BJ (cell line): ENCODE measurements at regions of chr14 and their contacts with region 1.

Region 1: GRCh38 chr14:24036169-24036962 is 15.4 kb upstream of the CARMIL3 start:
- DNase-seq: no peak
- H3K4me3 ChIP-seq: peak overlapping the region; percentile 54
- H3K27me3 ChIP-seq: 0 out of 2 replicates have a peak, but pooled peaks cover 2% of the 10 kb centered on the region
- CTCF ChIP-seq: peak; percentile 93

Region 2: GRCh38 chr14:23406244-23406643 is 630.1 kb before region 1 on chr14:
- CTCF ChIA-PET with region 1: no interaction called
- POLR2A ChIA-PET with region 1: no interaction called
- DNase-seq: no peak
- H3K4me3 ChIP-seq: no peak overlapping the region
- H3K27me3 ChIP-seq: peaks cover 9% of the 10 kb centered on the region
- CTCF ChIP-seq: no peak

Region 3: GRCh38 chr14:23883684-23884540 is 152.5 kb before region 1 on chr14:
- CTCF ChIA-PET with region 1: no interaction called
- POLR2A ChIA-PET with region 1: no interaction called
- DNase-seq: no peak
- H3K4me3 ChIP-seq: no peak overlapping the region
- H3K27me3 ChIP-seq: no peaks in the 10 kb centered on the region
- CTCF ChIP-seq: no peak

Region 4: DNA sequence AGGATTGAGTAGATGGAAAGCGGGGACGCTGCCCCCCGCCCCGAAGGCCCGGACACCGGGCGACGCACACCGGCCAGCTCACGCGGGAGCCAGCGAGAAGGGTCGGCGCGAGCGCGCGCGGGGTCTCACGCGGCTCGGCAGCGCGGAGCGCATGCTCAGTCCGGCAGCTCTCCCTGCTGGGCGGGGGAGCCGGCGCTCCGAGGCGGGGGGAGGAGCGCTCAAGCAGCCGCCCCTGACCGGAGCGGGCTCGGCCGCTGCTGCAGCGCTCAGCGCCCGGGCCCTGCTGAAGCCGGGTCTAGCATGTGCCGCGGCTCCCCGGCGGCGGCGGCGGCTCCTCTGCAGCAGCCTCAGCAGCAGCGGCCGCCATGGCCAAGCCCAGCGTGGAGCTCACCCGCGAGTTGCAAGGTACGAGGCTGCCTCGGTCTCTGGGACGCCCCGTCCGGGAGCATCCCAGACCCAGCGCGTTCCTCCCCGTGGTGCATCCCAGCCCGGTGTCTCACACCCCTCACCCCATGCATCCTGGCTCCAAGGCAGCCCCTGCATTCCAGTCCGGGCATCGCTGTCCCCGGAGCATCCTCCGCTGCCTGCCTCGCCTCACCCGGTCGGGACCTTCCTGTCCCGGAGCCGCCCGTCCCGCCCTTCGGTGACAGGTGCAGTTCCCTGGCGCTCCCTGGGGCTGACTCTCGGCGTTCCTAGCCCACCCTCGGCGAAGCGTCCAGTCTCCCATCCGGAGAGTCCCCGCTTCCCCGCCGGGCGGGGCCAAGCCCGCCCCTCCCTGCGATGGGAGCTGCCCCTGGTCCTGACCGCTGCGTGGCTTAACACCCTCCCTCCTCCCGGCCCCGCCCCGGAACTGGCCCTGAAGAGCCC is 15.7 kb after region 1 on chr14 and contains the start of gene CARMIL3:
- CTCF ChIA-PET with region 1: interaction called, 10 read pairs
- POLR2A ChIA-PET with region 1: no interaction called
- DNase-seq: no peak
- H3K4me3 ChIP-seq: peak within 1 kb of the TSS; percentile 48
- H3K27me3 ChIP-seq: peaks cover 15% of the 10 kb centered on the region
- CTCF ChIP-seq: no peak
- polyA plus RNA-seq, gene CARMIL3: 0.02 and 0.04 TPM in 2 replicates